ENCODE measurements at regions of chr14 and their contacts with region 1.

Region 1: DNA sequence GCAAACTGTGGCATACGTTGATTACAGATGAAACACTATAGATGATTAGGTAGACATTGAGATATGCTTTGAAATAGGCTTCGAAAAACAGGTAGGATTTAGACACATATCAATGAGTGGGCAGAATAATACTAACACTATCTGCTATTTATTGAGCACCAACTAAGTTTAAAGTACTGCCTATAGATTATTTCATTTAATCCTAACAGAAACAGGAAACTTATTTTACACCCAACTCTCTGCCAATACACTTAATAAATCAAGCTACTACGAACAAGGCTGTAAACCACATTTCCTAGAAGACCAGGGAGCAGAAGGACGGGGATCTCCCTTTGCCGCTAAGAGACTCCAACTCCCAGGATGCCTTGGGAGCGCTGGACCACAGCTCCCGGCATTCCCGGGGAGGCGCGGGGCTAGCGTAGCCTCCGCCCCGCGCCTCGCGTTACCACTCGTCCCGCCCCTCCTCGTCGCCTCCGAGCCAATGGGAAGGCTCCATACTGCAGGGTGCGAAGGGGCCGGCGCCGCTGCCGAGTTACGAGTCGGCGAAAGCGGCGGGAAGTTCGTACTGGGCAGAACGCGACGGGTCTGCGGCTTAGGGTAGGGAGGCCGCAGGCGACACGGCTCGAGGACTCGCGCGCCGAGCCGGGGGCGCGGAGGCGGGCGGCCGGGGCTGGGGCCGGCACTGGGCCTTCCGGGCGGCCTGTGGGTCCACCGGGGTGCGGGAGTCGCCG is at the start of gene VRK1:
- DNase-seq: peak; percentile 97
- H3K4me3 ChIP-seq: peak within 1 kb of the TSS; percentile 69 to 89 (median 75)
- H3K27ac ChIP-seq: peak within 1 kb of the TSS; percentile 81
- H3K4me1 ChIP-seq: no peaks in the 10 kb centered on the region
- H3K27me3 ChIP-seq: no peaks in the 10 kb centered on the region
- CTCF ChIP-seq: no peak
- total RNA-seq, gene VRK1: 15.5 to 27.9 TPM

Region 2: DNA sequence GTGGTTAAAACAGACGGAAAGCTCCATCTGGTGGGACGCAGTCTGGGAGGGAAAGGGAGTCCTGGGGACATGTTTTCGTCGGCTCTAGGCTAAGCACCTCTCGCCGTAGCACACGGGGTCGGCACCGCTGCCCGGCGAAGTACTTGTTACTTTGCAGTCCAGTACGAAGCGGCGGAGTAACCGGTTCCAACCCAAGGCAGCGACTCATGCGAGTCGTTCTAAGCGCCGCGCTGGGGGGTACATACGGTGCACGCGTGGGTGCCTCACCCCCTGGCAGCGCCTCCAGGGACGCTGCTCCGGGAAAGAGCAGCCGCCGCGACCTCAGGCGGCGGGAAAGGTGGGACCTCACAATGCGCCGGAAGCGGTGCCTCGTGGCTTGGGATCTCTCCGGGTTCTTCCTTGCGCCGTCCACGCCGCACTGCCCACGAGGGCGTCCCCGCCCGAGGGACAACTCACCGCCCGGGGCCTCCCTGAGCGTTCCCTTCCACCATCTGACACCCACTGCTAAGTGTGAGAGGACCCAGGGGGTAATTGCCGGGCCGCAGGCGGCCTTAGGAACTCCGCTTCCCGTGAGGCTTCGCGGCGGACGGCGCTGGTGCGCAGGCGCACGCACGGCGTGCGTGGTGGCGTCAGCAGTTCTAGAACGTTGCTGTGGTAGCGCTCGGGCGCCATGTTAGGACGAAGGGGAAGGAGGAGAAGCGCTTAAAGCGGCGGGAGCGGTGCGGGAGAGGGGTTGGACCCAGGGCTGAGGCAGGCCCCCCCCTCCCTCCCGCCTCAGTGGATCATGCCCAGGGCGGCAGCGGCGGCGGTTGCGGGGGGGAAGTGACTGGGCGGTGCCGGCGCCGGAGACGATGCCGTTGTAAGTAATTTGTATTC is 295.0 kb before region 1 on chr14 and contains the start of gene PAPOLA:
- CTCF ChIA-PET with region 1: no interaction called
- dilution Hi-C with region 1: no loop called
- in situ Hi-C with region 1: no loop called
- intact Hi-C with region 1: loop called (anchors 10 kb)
- DNase-seq: peak; percentile 94
- H3K4me3 ChIP-seq: peak within 1 kb of the TSS; percentile 98 to 100 (median 99)
- H3K27ac ChIP-seq: peak within 1 kb of the TSS; percentile 73
- H3K4me1 ChIP-seq: peaks cover 6% of the 10 kb centered on the region
- H3K27me3 ChIP-seq: no peaks in the 10 kb centered on the region
- CTCF ChIP-seq: peak in 1 of 2 donors; percentile 38
- total RNA-seq, gene PAPOLA: 117 to 152 TPM

Region 3: GRCh38 chr14:96811985-96812667 is 15.1 kb after region 1 on chr14:
- CTCF ChIA-PET with region 1: no interaction called
- dilution Hi-C with region 1: no loop called
- in situ Hi-C with region 1: no loop called
- intact Hi-C with region 1: loop called (anchors 2 kb)
- DNase-seq: no peak
- H3K4me3 ChIP-seq: no peak overlapping the region
- H3K27ac ChIP-seq: peak overlapping the region; percentile 31
- H3K4me1 ChIP-seq: peaks cover under 1% of the 10 kb centered on the region
- H3K27me3 ChIP-seq: no peaks in the 10 kb centered on the region
- CTCF ChIP-seq: no peak

Measured in mammary epithelial cell (primary cell).